Dorsolateral prefrontal cortex (tissue), 120 donors: ENCODE measurements at regions of chr14 and their contacts with region 1.

Region 1: DNA sequence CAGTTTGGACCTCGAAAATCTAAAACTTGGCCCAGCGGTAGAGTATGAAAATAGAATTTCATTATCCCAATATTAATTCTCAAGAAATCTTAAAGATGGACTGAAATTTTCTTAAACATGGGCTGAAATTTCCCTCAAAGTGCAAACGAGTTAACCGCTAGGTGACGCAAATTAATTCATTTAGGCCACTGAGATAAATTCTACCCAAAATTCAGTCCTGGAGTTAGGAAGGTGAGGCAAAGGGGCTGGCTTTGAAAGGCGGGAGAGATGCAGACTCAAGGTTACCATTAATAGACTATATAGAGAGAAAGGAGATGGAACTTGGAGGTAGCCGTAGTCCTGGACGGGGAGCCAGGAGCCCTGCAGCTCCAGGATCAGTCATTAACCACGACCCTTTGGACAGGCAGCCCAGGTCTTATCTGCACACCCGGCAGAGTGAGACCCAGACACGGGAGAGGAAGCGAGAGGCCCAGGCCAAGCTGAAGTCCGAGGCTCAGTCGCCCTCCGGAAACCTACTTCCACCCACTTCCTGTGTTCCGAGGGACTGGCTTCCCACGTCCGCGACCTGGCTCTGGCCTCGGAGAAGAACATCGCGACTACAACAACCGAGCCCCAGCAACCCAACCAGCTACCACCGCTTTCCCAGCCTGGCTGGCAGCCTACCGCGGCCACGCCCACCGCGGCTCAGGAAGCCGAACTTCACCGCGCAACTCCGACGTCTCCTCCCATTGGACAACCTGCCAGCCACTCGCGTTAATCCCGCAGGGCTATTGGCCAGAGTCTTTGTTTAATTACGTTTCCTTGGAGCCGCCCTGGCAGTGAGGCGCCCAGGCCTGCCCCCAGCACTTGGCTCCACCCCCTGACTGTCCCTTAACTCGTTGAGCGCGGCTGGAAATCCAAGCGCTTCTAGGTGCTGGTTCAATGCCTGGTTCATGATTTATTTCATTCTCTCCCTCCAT is at the start of gene EFCAB11:
- DNase-seq: peak; percentile 93 to 99 (median 98)
- H3K4me3 ChIP-seq: peak within 1 kb of the TSS; percentile 71 to 98 (median 90)
- H3K27ac ChIP-seq: peak within 1 kb of the TSS; percentile 1 to 91 (median 77)
- H3K27me3 ChIP-seq: no peaks in the 10 kb centered on the region
- CTCF ChIP-seq: peak in 15 of 56 donors; percentile 4 to 31 (median 20)
- total RNA-seq, gene EFCAB11: 6.1 to 28.8 (median 11.4) TPM

Region 2: GRCh38 chr14:90256354-90257131 is 302.2 kb after region 1 on chr14 and contains the start of gene PSMC1:
- intact Hi-C with region 1: loop called in 1 of 2 experiments (anchors 5 kb)
- DNase-seq: peak; percentile 81 to 95 (median 90)
- H3K4me3 ChIP-seq: peak within 1 kb of the TSS; percentile 71 to 100 (median 97)
- H3K27ac ChIP-seq: peak within 1 kb of the TSS in 57 of 59 donors; percentile 5 to 92 (median 78)
- H3K27me3 ChIP-seq: peaks cover 0 to 11% (median 0%) of the 10 kb centered on the region in 45 donors
- CTCF ChIP-seq: peak in 49 of 56 donors; percentile 3 to 64 (median 40)
- total RNA-seq, gene PSMC1: 46.1 to 111 (median 79.9) TPM